ENCODE measurements at regions of chr1 and their contacts with region 1.

Region 1: GRCh38 chr1:22416555-22417454 is 34.8 kb upstream of the ZBTB40 start:
- DNase-seq: peak; percentile 62
- ATAC-seq: peak; percentile 63
- H3K4me3 ChIP-seq: no peak overlapping the region
- H3K27ac ChIP-seq: no peak overlapping the region
- H3K4me1 ChIP-seq: peaks cover 43% of the 10 kb centered on the region
- H3K27me3 ChIP-seq: peaks cover 0 to 49% of the 10 kb centered on the region in 2 experiments; a peak in 4 of 5 replicates
- CTCF ChIP-seq: peak; percentile 98
- EP300 ChIP-seq: no peak
- POLR2A ChIP-seq: no peak
- RAD21 ChIP-seq: peak; percentile 98

Region 2: DNA sequence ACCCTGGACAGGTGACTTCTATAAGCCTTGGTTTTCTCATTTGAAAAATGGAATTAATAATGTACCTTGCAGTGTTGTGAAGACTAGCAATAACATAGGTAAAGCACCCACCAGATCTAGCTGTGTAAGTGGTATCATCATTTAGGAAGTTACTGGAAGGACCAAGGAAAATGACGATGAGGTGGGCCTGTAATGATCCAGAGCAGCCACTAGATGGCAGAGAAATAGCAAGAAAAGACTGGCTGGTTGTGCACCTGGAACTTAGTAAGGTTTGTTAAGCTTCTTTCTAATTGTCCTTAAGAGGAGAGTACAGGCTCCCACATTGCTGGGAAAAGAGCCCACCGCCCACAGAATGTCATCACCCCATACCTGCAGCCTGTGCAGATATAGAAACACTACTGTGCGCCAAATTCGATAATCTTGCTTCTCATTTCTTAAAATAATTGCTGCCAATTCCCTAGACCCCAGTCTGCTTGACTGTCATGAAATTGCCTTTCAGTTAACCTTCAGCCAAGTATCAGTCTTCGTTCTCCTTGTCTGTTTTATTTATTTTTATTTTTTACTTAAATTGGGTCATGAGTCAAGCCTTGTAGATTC is 311.1 kb before region 1 on chr1:
- CTCF ChIA-PET with region 1: interaction called, 17 read pairs
- POLR2A ChIA-PET with region 1: no interaction called
- in situ Hi-C with region 1: no loop called
- intact Hi-C with region 1: no loop called
- DNase-seq: peak; percentile 44
- ATAC-seq: peak; percentile 58
- H3K4me3 ChIP-seq: no peak overlapping the region
- H3K27ac ChIP-seq: no peak overlapping the region
- H3K4me1 ChIP-seq: peaks cover 15% of the 10 kb centered on the region; the same call in 1 of the 2 replicates
- H3K27me3 ChIP-seq: no peaks in the 10 kb centered on the region
- CTCF ChIP-seq: peak; percentile 76
- EP300 ChIP-seq: no peak
- POLR2A ChIP-seq: no peak
- RAD21 ChIP-seq: peak; percentile 43; the same call in 1 of the 2 replicates

Region 3: DNA sequence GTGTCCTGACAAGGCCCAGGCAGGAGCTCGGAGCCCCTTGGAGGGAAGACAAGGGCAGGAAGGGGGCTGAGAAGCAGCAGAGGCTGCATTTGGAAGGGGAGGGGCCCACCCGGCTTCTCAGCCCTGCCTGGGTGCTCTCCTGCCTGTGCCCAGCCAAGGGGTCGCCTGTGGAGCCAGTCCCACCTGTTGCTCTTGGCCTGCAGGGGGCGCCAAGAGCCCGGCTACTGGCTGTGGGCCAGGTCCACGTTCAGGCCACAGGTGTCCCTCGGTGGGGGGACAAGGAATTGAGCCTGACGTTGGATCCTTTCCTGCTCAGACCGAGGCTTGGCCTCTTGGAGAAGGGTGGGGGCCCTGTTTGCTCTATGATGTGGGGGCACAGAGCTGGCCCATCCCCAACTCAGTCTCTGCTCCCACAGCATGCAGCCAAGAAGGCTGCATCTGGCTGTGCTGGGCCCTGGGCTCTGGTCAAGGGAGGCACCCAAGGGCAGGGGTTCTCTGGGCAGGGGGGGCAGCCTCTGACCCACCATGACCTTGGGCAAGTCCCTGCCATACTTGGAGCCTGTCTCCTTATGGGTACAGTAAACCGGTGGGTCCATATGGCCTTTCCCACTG is 284.8 kb before region 1 on chr1:
- CTCF ChIA-PET with region 1: interaction called, 40 read pairs
- POLR2A ChIA-PET with region 1: no interaction called
- in situ Hi-C with region 1: loop called (anchors 5 kb)
- intact Hi-C with region 1: loop called (anchors 1 kb)
- DNase-seq: peak; percentile 30
- ATAC-seq: peak; percentile 85
- H3K4me3 ChIP-seq: no peak overlapping the region
- H3K27ac ChIP-seq: no peak overlapping the region
- H3K4me1 ChIP-seq: no peaks in the 10 kb centered on the region
- H3K27me3 ChIP-seq: peaks cover 11 to 43% of the 10 kb centered on the region in 2 experiments
- CTCF ChIP-seq: peak; percentile 97
- EP300 ChIP-seq: no peak
- POLR2A ChIP-seq: no peak
- RAD21 ChIP-seq: peak; percentile 92

Region 4: GRCh38 chr1:22216210-22216883 is 200.5 kb before region 1 on chr1:
- CTCF ChIA-PET with region 1: no interaction called
- POLR2A ChIA-PET with region 1: no interaction called
- in situ Hi-C with region 1: loop called (anchors 5 kb)
- intact Hi-C with region 1: loop called (anchors 10 kb)
- DNase-seq: no peak
- ATAC-seq: peak; percentile 61
- H3K4me3 ChIP-seq: no peak overlapping the region
- H3K27ac ChIP-seq: no peak overlapping the region
- H3K4me1 ChIP-seq: no peaks in the 10 kb centered on the region
- H3K27me3 ChIP-seq: peaks cover 4 to 65% of the 10 kb centered on the region in 2 experiments
- CTCF ChIP-seq: no peak
- EP300 ChIP-seq: no peak
- POLR2A ChIP-seq: no peak
- RAD21 ChIP-seq: no peak

Region 5: DNA sequence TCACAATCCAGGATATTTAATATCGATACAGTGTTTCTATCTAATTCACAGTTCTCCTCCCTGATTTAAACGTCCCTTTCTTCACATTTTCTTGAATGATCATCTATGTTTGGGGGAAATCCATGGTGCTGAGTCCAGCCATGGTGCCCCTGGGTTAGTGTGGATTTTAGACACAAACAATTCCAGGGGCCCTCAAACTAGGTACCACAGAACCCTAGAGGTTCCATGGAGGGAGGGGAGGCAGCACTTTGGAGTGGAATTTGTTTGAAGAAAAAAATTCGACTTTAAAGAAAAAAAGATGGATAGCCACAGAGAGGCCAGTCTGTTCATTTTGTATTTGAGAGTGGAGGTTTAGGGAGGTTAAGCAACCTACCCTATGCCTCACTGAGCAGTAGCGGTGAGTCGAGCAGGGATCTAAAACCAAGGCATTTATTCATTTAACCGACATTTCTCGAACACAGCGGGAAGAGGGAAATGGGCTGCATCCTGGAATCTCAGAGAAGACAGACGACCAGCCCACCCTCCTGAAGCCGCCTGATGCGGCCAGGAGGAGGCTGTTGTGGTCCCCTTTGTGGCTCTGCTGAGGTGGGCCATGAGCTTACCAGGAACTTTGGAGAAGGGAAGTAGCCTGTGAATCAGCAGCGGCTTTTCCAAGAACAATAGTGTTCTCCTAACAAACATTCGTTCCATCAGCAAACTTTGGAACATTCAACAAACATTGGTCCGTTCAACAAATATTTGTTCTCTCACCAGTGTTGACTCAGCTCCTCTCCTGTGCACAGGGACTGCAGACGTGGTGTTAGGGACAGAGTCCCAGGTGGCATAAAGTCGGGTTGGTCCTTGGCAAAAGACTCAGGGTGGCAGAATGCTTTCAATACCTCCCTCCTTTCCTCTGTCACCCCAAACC is 68.7 kb before region 1 on chr1:
- CTCF ChIA-PET with region 1: no interaction called
- POLR2A ChIA-PET with region 1: no interaction called
- in situ Hi-C with region 1: no loop called
- intact Hi-C with region 1: loop called (anchors 1 kb)
- DNase-seq: peak; percentile 91
- ATAC-seq: peak; percentile 97
- H3K4me3 ChIP-seq: peak overlapping the region in 1 of 3 experiments; percentile 37; a peak in 1 of 6 replicates
- H3K27ac ChIP-seq: no peak overlapping the region
- H3K4me1 ChIP-seq: peaks cover 34% of the 10 kb centered on the region
- H3K27me3 ChIP-seq: peaks cover 12 to 71% of the 10 kb centered on the region in 2 experiments
- CTCF ChIP-seq: peak; percentile 21; the same call in 1 of the 2 replicates
- EP300 ChIP-seq: peak; percentile 73 to 82; a peak in 3 of 4 replicates
- POLR2A ChIP-seq: no peak
- RAD21 ChIP-seq: no peak

Region 6: GRCh38 chr1:22365331-22366295 is 51.2 kb before region 1 on chr1:
- CTCF ChIA-PET with region 1: no interaction called
- POLR2A ChIA-PET with region 1: no interaction called
- in situ Hi-C with region 1: no loop called
- intact Hi-C with region 1: no loop called
- DNase-seq: no peak
- ATAC-seq: no peak
- H3K4me3 ChIP-seq: no peak overlapping the region
- H3K27ac ChIP-seq: no peak overlapping the region
- H3K4me1 ChIP-seq: peaks cover 20% of the 10 kb centered on the region
- H3K27me3 ChIP-seq: peaks cover 12 to 51% of the 10 kb centered on the region in 2 experiments
- CTCF ChIP-seq: no peak
- EP300 ChIP-seq: no peak
- POLR2A ChIP-seq: no peak
- RAD21 ChIP-seq: no peak

Region 7: GRCh38 chr1:22398656-22399420 is 18.0 kb before region 1 on chr1:
- CTCF ChIA-PET with region 1: no interaction called
- POLR2A ChIA-PET with region 1: no interaction called
- in situ Hi-C with region 1: no loop called
- intact Hi-C with region 1: no loop called
- DNase-seq: no peak
- ATAC-seq: no peak
- H3K4me3 ChIP-seq: no peak overlapping the region
- H3K27ac ChIP-seq: no peak overlapping the region
- H3K4me1 ChIP-seq: no peaks in the 10 kb centered on the region
- H3K27me3 ChIP-seq: peaks cover 5 to 58% of the 10 kb centered on the region in 2 experiments; a peak in 3 of 5 replicates
- CTCF ChIP-seq: no peak
- EP300 ChIP-seq: no peak
- POLR2A ChIP-seq: no peak
- RAD21 ChIP-seq: no peak

Region 8: GRCh38 chr1:22641906-22642636 is 225.3 kb after region 1 on chr1:
- CTCF ChIA-PET with region 1: interaction called, 43 read pairs
- POLR2A ChIA-PET with region 1: no interaction called
- in situ Hi-C with region 1: loop called (anchors 5 kb)
- intact Hi-C with region 1: no loop called
- DNase-seq: peak; percentile 16
- ATAC-seq: peak; percentile 87
- H3K4me3 ChIP-seq: no peak overlapping the region
- H3K27ac ChIP-seq: no peak overlapping the region
- H3K4me1 ChIP-seq: no peaks in the 10 kb centered on the region
- H3K27me3 ChIP-seq: peaks cover 6 to 22% of the 10 kb centered on the region in 2 experiments; a peak in 3 of 5 replicates
- CTCF ChIP-seq: peak; percentile 95
- EP300 ChIP-seq: no peak
- POLR2A ChIP-seq: no peak
- RAD21 ChIP-seq: peak; percentile 92

Region 9: DNA sequence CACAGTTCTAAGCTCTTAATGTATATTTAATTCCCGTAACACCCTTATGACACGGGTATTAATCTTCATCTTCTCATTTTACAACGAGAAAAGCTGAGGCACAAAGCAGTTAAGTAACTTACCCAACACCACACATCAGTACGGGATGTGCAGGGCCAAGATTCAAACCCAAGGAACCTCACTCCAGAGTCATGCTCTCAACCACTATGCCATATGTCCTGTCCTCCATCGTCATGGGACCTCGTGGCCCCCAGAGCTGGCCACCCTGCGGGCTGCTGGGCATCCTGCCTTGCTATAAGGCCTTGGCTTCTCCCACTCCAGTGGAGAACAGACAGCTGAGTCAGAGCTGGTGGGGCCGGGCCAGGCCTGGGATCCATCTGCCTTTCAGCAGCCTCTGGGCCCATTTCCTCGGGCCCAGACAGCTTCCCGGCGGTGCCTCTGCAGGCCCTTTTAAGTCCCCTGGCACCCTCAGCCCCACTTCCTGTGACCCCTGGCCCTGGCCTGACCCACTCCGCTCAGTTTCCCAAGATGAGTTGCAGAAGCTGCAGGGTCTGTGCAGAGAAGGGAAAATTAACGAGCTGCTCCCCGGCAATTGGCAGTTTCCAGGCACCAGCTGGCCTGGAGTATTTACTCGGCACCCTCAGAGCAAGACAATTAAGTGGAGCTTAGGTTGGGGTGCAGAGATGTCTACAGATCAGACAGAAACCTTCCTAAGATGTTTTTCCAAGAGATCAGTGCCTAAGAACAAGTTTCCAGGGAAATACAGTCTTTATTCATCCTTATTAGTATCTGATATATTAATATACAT is 392.1 kb after region 1 on chr1:
- CTCF ChIA-PET with region 1: no interaction called
- POLR2A ChIA-PET with region 1: no interaction called
- in situ Hi-C with region 1: no loop called
- intact Hi-C with region 1: no loop called
- DNase-seq: no peak
- ATAC-seq: no peak
- H3K4me3 ChIP-seq: no peak overlapping the region
- H3K27ac ChIP-seq: no peak overlapping the region
- H3K4me1 ChIP-seq: no peaks in the 10 kb centered on the region
- H3K27me3 ChIP-seq: peaks cover 0 to 10% of the 10 kb centered on the region in 2 experiments; a peak in 3 of 5 replicates
- CTCF ChIP-seq: no peak
- EP300 ChIP-seq: no peak
- POLR2A ChIP-seq: no peak
- RAD21 ChIP-seq: no peak